Aorta (tissue), 5 donors: ENCODE measurements at regions of chr7 and their contacts with region 1.

Region 1: DNA sequence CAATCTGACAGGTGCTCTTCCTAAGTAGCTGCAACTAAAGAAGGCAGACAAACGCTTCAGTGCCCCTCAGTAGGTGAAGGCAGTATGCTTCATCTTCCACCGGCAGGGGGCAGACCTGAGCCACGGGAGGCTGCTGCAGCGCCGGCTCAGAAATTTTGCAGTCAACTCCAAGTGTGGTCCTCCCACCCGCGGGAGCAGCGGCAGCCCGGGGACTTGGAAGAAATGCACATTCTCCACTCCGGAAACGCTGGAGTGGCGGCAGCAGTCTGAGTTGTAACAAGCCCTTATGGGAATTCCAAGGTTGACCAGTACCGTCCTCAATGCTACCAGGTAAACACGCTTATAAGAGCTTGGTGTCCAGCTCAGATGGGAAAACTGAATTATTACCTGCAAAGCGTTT is 3.4 kb downstream of the IGFBP3 start:
- DNase-seq: peak; percentile 85 to 96
- ATAC-seq: peak; percentile 68
- H3K4me3 ChIP-seq: no peak overlapping the region
- H3K27ac ChIP-seq: no peak overlapping the region
- H3K4me1 ChIP-seq: no peaks in the 10 kb centered on the region
- H3K27me3 ChIP-seq: no peaks in the 10 kb centered on the region

Region 2: DNA sequence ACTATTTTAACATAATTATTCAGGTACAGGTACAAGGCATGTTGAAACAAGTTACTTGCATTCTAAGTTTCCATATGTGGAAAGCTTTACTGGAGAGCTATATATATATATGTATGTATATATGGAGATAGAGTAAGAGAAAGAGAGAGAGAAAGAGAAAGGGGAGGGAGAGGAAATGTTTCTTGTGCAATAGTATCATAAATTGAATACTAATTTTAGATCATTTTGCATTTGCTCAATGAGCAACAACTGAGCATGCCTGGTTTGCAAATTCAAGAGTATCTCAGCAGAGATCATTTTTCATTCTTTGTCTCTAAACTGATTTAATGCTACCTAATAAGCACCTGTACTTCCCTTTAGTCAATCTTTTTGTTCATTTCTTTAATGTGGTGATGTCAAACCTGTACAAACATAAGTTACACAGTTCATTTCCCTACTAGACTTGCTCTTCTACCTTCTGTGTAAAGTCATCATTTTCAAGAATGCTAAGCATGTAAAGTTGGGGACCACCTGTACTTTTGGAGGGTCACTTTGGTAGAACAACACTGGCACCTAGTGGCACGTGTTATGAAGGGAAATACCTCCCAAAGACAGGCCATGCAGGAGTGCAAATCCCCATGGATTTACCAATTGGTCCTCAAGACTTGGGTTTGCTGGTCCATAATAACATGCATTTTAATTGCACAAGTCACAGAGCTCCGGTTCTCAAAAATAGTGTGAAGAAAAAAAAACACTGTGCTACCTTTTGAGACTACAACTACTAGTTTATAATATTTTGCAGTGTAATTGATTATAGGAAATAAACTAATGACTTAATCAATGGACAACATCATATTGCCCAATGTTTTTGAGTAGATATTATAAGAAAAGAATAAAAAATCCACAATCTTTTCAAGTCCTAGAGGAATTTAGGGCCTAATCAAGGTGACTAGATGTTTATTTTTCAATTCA is 434.6 kb after region 1 on chr7:
- intact Hi-C with region 1: loop called (anchors 1 to 2 kb)
- DNase-seq: no peak
- ATAC-seq: peak; percentile 56
- H3K4me3 ChIP-seq: no peak overlapping the region
- H3K27ac ChIP-seq: no peak overlapping the region
- H3K4me1 ChIP-seq: no peaks in the 10 kb centered on the region
- H3K27me3 ChIP-seq: no peaks in the 10 kb centered on the region

Region 3: GRCh38 chr7:47179812-47180515 is 1262.3 kb after region 1 on chr7:
- intact Hi-C with region 1: loop called (anchors 1 kb)
- DNase-seq: no peak
- ATAC-seq: peak; percentile 76
- H3K4me3 ChIP-seq: no peak overlapping the region
- H3K27ac ChIP-seq: no peak overlapping the region
- H3K4me1 ChIP-seq: peaks cover 0 to 6% of the 10 kb centered on the region in 2 donors
- H3K27me3 ChIP-seq: no peaks in the 10 kb centered on the region